ENCODE measurements at regions of chr20 and their contacts with region 1.

Region 1: DNA sequence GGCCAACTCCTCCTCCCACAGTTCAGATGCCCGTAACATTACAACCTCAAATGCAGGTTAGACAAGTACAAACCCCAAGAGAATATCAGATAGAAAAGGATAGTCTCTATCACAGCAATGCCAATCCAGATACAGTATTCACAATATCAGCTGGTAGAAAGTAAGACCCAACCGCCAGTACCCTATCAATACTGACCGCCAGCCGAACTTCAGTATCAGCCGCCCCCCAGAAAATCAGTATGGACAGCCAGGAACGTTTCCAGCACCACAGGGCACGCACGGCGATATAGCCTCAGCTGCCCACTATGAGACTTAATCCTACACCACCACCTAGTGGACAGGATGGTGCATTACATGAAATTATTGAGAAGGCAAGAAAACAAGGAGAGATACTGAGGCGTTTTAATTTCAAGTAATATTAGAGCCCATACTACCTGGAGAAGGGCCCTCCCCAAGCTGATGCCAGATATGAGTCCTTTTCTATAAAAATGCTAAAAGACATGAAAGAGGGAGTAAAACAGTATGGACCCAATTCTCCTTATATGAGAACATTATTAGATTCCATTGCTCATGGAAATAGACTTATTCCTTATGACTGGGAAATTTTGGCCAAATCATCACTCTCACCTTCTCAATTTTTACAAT is 17.6 kb upstream of the EIF2S2 start:
- DNase-seq: peak; percentile 79
- H3K4me3 Mint-ChIP-seq: peak overlapping the region; percentile 17
- H3K27ac Mint-ChIP-seq: no peak overlapping the region
- H3K4me1 Mint-ChIP-seq: no peaks in the 10 kb centered on the region
- H3K27me3 Mint-ChIP-seq: peaks cover 23% of the 10 kb centered on the region
- CTCF ChIP-seq: peak; percentile 73

Region 2: GRCh38 chr20:33862709-33863403 is 266.8 kb before region 1 on chr20:
- CTCF ChIA-PET with region 1: no interaction called
- POLR2A ChIA-PET with region 1: no interaction called
- intact Hi-C with region 1: loop called (anchors 1 kb)
- DNase-seq: peak; percentile 33
- H3K4me3 Mint-ChIP-seq: no peak overlapping the region
- H3K27ac Mint-ChIP-seq: no peak overlapping the region
- H3K4me1 Mint-ChIP-seq: no peaks in the 10 kb centered on the region
- H3K27me3 Mint-ChIP-seq: peaks cover 20% of the 10 kb centered on the region
- CTCF ChIP-seq: peak; percentile 42

Region 3: GRCh38 chr20:33900521-33901131 is 229.0 kb before region 1 on chr20:
- CTCF ChIA-PET with region 1: no interaction called
- POLR2A ChIA-PET with region 1: no interaction called
- intact Hi-C with region 1: no loop called
- DNase-seq: no peak
- H3K4me3 Mint-ChIP-seq: no peak overlapping the region
- H3K27ac Mint-ChIP-seq: no peak overlapping the region
- H3K4me1 Mint-ChIP-seq: peaks cover 4% of the 10 kb centered on the region
- H3K27me3 Mint-ChIP-seq: peaks cover 53% of the 10 kb centered on the region
- CTCF ChIP-seq: no peak

Region 4: GRCh38 chr20:33915726-33916331 is 213.8 kb before region 1 on chr20:
- CTCF ChIA-PET with region 1: no interaction called
- POLR2A ChIA-PET with region 1: no interaction called
- intact Hi-C with region 1: loop called (anchors 5 kb)
- DNase-seq: peak; percentile 47
- H3K4me3 Mint-ChIP-seq: no peak overlapping the region
- H3K27ac Mint-ChIP-seq: no peak overlapping the region
- H3K4me1 Mint-ChIP-seq: no peaks in the 10 kb centered on the region
- H3K27me3 Mint-ChIP-seq: peaks cover 32% of the 10 kb centered on the region
- CTCF ChIP-seq: peak; percentile 50

Region 5: GRCh38 chr20:33933469-33933909 is 196.2 kb before region 1 on chr20:
- CTCF ChIA-PET with region 1: interaction called, 3 read pairs
- POLR2A ChIA-PET with region 1: no interaction called
- intact Hi-C with region 1: loop called (anchors 1 kb)
- DNase-seq: peak; percentile 79
- H3K4me3 Mint-ChIP-seq: no peak overlapping the region
- H3K27ac Mint-ChIP-seq: no peak overlapping the region
- H3K4me1 Mint-ChIP-seq: peaks cover 5% of the 10 kb centered on the region
- H3K27me3 Mint-ChIP-seq: peaks cover 16% of the 10 kb centered on the region
- CTCF ChIP-seq: peak; percentile 64

Region 6: DNA sequence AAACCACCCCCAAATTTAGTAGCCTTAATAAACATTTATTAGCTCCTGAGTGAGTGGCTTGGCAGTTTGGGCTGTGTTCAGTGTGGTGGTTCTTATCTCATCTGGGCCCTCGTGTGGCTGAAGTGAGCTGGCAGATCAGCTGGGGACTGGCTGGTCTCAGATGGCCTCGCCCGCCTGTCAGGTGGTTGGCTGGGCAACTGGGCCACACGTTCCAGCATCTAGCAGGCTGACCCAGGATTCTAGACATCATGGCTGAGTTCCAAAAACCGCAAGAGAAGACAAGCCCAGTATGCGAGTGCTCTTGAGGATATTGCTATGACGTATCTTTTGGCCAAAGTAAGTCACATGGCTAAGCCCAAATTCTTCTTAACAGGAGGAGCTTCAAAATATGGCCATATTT is 46.5 kb before region 1 on chr20:
- CTCF ChIA-PET with region 1: interaction called, 8 read pairs
- POLR2A ChIA-PET with region 1: no interaction called
- intact Hi-C with region 1: loop called (anchors 1 kb)
- DNase-seq: peak; percentile 96
- H3K4me3 Mint-ChIP-seq: no peak overlapping the region
- H3K27ac Mint-ChIP-seq: peak overlapping the region; percentile 82
- H3K4me1 Mint-ChIP-seq: peaks cover 24% of the 10 kb centered on the region
- H3K27me3 Mint-ChIP-seq: no peaks in the 10 kb centered on the region
- CTCF ChIP-seq: no peak

Measured in MCF 10A (cell line).